ENCODE measurements at regions of chr11 and their contacts with region 1.

Region 1: DNA sequence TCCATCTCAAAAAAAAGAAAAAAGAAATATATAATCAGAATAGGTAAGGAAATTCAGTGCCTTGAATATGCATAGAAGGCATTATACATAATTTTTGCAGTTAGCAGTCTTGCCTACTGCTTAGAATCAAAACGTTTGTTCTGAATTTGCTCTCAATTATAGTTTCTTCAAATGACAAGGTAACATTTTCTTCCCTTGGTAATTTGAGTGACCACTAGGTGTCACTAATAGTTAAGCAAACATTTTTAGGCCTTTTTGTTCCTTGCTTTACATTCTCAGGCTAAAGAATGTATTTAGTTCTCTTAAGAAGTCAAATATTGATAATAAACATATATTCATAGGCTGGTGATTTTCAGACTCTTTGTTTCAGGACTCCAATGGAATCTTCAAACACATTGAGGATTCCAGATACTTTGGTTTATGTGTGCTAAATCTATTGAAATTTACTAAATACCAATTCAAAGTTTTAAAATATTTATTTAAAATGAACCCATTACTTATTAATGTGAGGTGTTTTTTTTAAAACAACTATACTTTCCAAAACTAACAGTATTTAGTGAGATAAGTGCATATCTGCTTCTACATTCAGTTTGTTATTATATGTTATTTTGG is 55.0 kb upstream of the DEPDC7 start:
- DNase-seq: no peak
- ATAC-seq: no peak
- H3K4me3 ChIP-seq: no peak overlapping the region
- H3K27ac ChIP-seq: no peak overlapping the region
- H3K4me1 ChIP-seq: no peaks in the 10 kb centered on the region
- H3K27me3 ChIP-seq: no peaks in the 10 kb centered on the region

Region 2: DNA sequence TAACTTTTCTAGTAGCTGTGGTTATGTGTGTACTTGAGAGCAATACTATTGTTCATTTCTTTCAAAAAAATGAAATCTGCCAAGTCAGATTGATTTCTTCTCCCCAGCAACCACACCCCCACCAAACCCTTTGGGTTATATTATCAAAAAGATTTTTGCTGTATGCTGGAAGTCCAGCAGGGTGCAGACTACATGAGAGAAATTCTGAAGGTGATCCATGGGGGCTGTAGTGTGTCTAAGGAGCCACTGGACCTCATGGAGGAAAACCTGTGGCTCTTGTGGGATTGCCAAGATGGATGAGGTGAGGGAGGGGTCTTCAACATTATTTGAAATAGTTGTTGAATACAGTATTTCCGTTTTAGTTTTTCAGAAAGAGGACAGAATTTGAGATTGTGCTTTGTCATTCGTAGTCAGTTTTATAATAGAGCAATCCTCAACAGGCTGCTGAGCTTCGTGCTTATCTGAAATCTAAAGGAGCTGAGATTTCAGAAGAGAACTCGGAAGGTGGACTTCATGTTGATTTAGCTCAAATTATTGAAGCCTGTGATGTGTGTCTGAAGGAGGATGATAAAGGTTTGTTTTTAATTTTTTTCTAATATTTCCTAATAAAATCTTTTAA is 374.0 kb before region 1 on chr11:
- intact Hi-C with region 1: no loop called
- DNase-seq: no peak
- ATAC-seq: no peak
- H3K4me3 ChIP-seq: no peak overlapping the region
- H3K27ac ChIP-seq: no peak overlapping the region
- H3K4me1 ChIP-seq: peaks cover 0 to 3% of the 10 kb centered on the region in 2 donors
- H3K27me3 ChIP-seq: no peaks in the 10 kb centered on the region

Region 3: GRCh38 chr11:32602657-32603415 is 357.8 kb before region 1 on chr11:
- intact Hi-C with region 1: no loop called
- DNase-seq: no peak
- ATAC-seq: no peak
- H3K4me3 ChIP-seq: no peak overlapping the region
- H3K27ac ChIP-seq: no peak overlapping the region
- H3K4me1 ChIP-seq: peaks cover 0 to 2% of the 10 kb centered on the region in 2 donors
- H3K27me3 ChIP-seq: no peaks in the 10 kb centered on the region

Region 4: GRCh38 chr11:32701616-32702015 is 259.0 kb before region 1 on chr11:
- intact Hi-C with region 1: no loop called
- DNase-seq: no peak
- ATAC-seq: no peak
- H3K4me3 ChIP-seq: no peak overlapping the region
- H3K27ac ChIP-seq: no peak overlapping the region
- H3K4me1 ChIP-seq: no peaks in the 10 kb centered on the region
- H3K27me3 ChIP-seq: no peaks in the 10 kb centered on the region

Region 5: GRCh38 chr11:33059331-33060007 is 98.8 kb after region 1 on chr11:
- intact Hi-C with region 1: loop called (anchors 2 to 5 kb)
- DNase-seq: no peak
- ATAC-seq: no peak
- H3K4me3 ChIP-seq: no peak overlapping the region
- H3K27ac ChIP-seq: no peak overlapping the region
- H3K4me1 ChIP-seq: no peaks in the 10 kb centered on the region
- H3K27me3 ChIP-seq: no peaks in the 10 kb centered on the region

Region 6: GRCh38 chr11:33065445-33066178 is 105.0 kb after region 1 on chr11:
- intact Hi-C with region 1: loop called in 1 of 2 experiments (anchors 2 kb)
- DNase-seq: peak; percentile 77 to 82
- ATAC-seq: peak; percentile 73
- H3K4me3 ChIP-seq: no peak overlapping the region
- H3K27ac ChIP-seq: no peak overlapping the region
- H3K4me1 ChIP-seq: no peaks in the 10 kb centered on the region
- H3K27me3 ChIP-seq: no peaks in the 10 kb centered on the region

Measured in aorta (tissue), 5 donors.